CD4-positive, alpha-beta T cell (primary cell): ENCODE measurements at regions of chr1 and their contacts with region 1.

Region 1: DNA sequence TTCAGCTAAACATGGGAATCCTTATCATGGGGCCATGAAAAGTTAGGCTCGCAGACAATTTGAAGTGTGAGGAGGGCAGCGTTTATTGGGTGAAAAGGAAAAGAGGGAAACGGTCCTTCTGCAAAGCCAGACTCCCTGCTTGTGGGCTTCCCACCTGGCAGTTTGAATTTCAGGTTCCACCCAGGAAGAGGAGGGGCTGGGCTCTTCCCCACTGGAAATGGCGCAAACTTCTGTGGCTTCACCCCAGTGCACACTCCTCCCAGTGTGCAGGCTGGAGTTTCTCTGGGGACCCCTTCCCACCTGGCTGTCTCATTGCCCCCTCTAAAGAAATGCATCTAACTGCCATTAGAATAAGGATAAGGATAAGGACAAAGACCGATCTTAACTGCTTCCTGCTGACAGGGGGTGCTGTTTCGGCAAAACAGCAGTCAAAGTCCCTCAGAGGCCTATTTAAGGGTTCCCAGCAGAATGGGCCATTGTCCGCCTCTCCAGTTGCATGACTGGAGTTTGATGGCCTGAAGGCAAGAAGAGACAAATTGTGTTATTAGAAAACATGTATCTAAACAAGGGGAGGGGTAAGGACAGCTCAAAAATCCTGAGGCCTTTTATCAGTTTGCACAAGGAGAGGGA is 20.4 kb downstream of the AIM2 start:
- DNase-seq: peak in 1 of 14 experiments; percentile 12
- ATAC-seq: no peak
- H3K4me3 ChIP-seq: no peak overlapping the region
- H3K4me3 Mint-ChIP-seq: no peak overlapping the region
- H3K27ac ChIP-seq: no peak overlapping the region
- H3K27ac Mint-ChIP-seq: peak overlapping the region; percentile 19
- H3K4me1 ChIP-seq: peaks cover 3% of the 10 kb centered on the region
- H3K4me1 Mint-ChIP-seq: peaks cover 35% of the 10 kb centered on the region
- H3K27me3 ChIP-seq: no peaks in the 10 kb centered on the region
- H3K27me3 Mint-ChIP-seq: no peaks in the 10 kb centered on the region
- CTCF ChIP-seq: no peak

Region 2: GRCh38 chr1:158951956-158952355 is 104.2 kb before region 1 on chr1:
- CTCF ChIA-PET with region 1: no interaction called
- POLR2A ChIA-PET with region 1: no interaction called
- intact Hi-C with region 1: no loop called
- DNase-seq: peak in 2 of 14 experiments; percentile 10 to 27
- ATAC-seq: no peak
- H3K4me3 ChIP-seq: no peak overlapping the region
- H3K4me3 Mint-ChIP-seq: no peak overlapping the region
- H3K27ac ChIP-seq: no peak overlapping the region
- H3K27ac Mint-ChIP-seq: no peak overlapping the region
- H3K4me1 ChIP-seq: peaks cover 10% of the 10 kb centered on the region
- H3K4me1 Mint-ChIP-seq: peaks cover 9% of the 10 kb centered on the region
- H3K27me3 ChIP-seq: no peaks in the 10 kb centered on the region
- H3K27me3 Mint-ChIP-seq: peaks cover 4% of the 10 kb centered on the region
- CTCF ChIP-seq: no peak

Region 3: GRCh38 chr1:159015440-159015909 is 40.7 kb before region 1 on chr1:
- CTCF ChIA-PET with region 1: no interaction called
- POLR2A ChIA-PET with region 1: no interaction called
- intact Hi-C with region 1: loop called in 1 of 2 experiments (anchors 5 kb)
- DNase-seq: peak in 13 of 14 experiments; percentile 46 to 88 (median 55)
- ATAC-seq: peak; percentile 93
- H3K4me3 ChIP-seq: peak overlapping the region; percentile 0
- H3K4me3 Mint-ChIP-seq: peak overlapping the region; percentile 78
- H3K27ac ChIP-seq: peak overlapping the region; percentile 56 to 58
- H3K27ac Mint-ChIP-seq: peak overlapping the region; percentile 83
- H3K4me1 ChIP-seq: peaks cover 38% of the 10 kb centered on the region
- H3K4me1 Mint-ChIP-seq: peaks cover 81% of the 10 kb centered on the region
- H3K27me3 ChIP-seq: no peaks in the 10 kb centered on the region
- H3K27me3 Mint-ChIP-seq: no peaks in the 10 kb centered on the region
- CTCF ChIP-seq: no peak